ENCODE measurements at regions of chr3 and their contacts with region 1.

Region 1: DNA sequence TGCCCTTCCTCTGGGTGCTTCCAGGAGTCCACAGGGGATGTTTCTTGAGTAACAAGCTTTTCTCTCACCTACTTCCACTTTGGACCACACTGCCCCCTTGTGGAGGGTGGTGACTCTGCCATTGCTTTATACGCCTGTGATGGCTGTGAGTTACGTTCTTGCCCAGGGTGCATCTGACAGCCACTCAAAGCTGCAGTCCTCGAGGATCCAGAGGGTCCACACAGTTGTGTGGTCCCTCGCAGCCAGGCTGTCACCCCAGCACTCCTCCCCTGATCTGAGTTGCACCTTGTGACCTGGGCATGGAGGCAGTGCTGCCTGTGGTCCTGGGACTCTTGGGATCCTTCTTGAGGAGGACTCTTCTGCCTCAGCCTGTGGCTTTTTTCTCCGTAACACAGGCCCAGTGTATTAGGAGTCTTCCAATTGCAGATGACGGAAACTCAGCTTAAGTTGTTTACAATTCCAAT is 23.4 kb downstream of the FOXL2 start:
- DNase-seq: peak in 1 of 2 experiments; percentile 96
- H3K4me3 ChIP-seq: no peak overlapping the region
- H3K27ac ChIP-seq: no peak overlapping the region
- H3K4me1 ChIP-seq: no peaks in the 10 kb centered on the region; a peak in 1 of 7 replicates
- H3K27me3 ChIP-seq: no peaks in the 10 kb centered on the region; a peak in 1 of 7 replicates
- CTCF ChIP-seq: peak; percentile 82 to 96 (median 86)
- EP300 ChIP-seq: no peak
- POLR2A ChIP-seq: no peak
- RAD21 ChIP-seq: peak; percentile 90 to 91

Region 2: DNA sequence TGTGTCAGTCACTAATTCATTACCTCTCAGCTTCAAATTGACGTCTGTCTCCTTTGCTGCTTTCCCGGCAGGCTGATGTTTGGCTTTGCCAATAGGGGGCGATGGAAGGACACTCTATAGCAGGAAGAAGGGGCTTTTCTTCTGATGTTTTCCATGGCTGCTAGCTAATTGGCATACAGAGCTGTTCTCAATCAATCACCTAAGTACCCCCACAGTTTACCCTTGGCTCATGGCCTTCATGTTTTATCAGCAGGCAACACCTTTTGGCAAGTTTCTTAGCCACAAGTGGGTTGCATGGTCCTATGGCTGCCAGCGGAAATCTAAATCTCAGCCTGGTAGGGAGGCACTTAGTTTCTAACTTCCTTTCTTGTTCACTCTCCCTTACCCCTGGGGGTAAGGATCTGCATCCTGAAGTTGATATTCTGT is 444.1 kb before region 1 on chr3:
- CTCF ChIA-PET with region 1: interaction called, 33 read pairs
- POLR2A ChIA-PET with region 1: no interaction called
- DNase-seq: no peak
- H3K4me3 ChIP-seq: no peak overlapping the region
- H3K27ac ChIP-seq: no peak overlapping the region
- H3K4me1 ChIP-seq: peaks cover 0 to 2% (median 0%) of the 10 kb centered on the region in 4 experiments; a peak in 1 of 7 replicates
- H3K27me3 ChIP-seq: no peaks in the 10 kb centered on the region
- CTCF ChIP-seq: peak; percentile 74 to 90 (median 81)
- EP300 ChIP-seq: no peak
- POLR2A ChIP-seq: no peak
- RAD21 ChIP-seq: peak; percentile 87 to 91

Region 3: DNA sequence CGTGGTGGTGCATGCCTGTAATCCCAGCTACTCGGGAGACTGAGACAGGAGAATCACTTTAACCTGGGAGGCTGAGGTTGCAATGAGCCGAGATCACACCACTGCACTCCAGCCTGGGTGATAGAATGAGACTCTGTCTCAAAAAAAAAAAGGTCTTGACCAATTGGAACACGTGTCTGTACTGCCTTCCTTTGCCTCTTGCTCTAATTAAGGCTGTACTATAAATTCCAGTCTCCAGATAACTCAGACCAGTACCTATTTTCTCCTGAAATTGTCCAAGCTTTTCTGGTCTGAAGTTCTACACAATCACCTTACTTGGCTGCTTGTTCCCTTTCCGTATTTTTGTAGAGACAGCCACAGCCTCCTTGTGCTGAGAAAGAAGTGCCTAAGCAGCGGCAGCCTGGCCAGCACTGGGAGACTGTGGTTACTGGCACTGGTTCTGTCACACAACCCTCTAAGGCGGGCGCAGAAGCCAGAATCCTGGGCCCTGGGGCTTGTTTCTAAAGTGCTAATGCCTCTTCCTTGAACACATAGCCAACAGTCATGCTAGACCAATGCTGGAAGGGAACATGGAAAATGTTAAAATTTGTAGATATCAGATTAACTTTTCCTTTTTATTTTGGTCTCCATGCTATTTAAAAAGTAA is 323.3 kb before region 1 on chr3:
- CTCF ChIA-PET with region 1: interaction called, 80 read pairs
- POLR2A ChIA-PET with region 1: no interaction called
- DNase-seq: no peak
- H3K4me3 ChIP-seq: no peak overlapping the region
- H3K27ac ChIP-seq: no peak overlapping the region
- H3K4me1 ChIP-seq: no peaks in the 10 kb centered on the region
- H3K27me3 ChIP-seq: no peaks in the 10 kb centered on the region
- CTCF ChIP-seq: no peak
- EP300 ChIP-seq: no peak
- POLR2A ChIP-seq: no peak
- RAD21 ChIP-seq: no peak

Region 4: GRCh38 chr3:138668107-138668506 is 255.5 kb before region 1 on chr3:
- CTCF ChIA-PET with region 1: interaction called, 20 read pairs
- POLR2A ChIA-PET with region 1: no interaction called
- DNase-seq: no peak
- H3K4me3 ChIP-seq: no peak overlapping the region
- H3K27ac ChIP-seq: no peak overlapping the region
- H3K4me1 ChIP-seq: no peaks in the 10 kb centered on the region
- H3K27me3 ChIP-seq: no peaks in the 10 kb centered on the region
- CTCF ChIP-seq: no peak
- EP300 ChIP-seq: no peak
- POLR2A ChIP-seq: no peak
- RAD21 ChIP-seq: no peak

Region 5: GRCh38 chr3:138842483-138843188 is 80.9 kb before region 1 on chr3:
- CTCF ChIA-PET with region 1: interaction called, 20 read pairs
- POLR2A ChIA-PET with region 1: no interaction called
- DNase-seq: no peak
- H3K4me3 ChIP-seq: no peak overlapping the region
- H3K27ac ChIP-seq: no peak overlapping the region
- H3K4me1 ChIP-seq: peaks cover 7 to 21% (median 12%) of the 10 kb centered on the region in 4 experiments; a peak in 6 of 7 replicates
- H3K27me3 ChIP-seq: no peaks in the 10 kb centered on the region
- CTCF ChIP-seq: no peak
- EP300 ChIP-seq: no peak
- POLR2A ChIP-seq: no peak
- RAD21 ChIP-seq: no peak

Region 6: DNA sequence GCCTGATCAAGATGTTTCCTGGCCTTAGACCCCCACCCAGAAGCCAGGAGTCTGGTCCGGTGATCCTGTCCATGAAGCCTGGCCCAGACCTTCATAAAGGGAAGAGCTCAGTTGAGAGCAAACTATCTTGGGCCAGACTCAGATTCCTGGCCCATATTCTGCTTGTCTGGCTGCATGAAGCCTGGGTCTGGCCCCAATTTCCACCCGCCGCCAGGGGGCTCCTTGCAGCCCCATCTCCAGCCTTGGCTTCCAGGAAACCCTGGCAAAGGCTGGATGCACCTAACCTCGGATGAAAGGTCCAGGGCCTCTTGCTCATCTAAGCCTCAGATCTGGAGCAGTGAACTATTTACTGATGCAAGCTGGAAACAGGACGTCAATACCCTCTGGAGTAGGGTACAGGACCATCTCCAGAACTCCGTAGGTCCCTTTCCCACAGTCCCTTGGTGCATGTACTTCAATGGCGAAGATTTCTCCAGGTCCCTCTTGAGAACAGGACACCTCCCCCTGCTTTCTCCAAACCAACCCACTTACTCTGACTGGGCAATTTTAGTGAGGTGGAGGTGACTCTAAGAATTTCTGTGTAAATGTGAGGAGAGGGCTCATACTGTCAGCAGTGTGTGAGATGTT is 17.8 kb after region 1 on chr3:
- CTCF ChIA-PET with region 1: interaction called, 180 read pairs
- POLR2A ChIA-PET with region 1: interaction called, 3 read pairs
- DNase-seq: peak in 1 of 2 experiments; percentile 88
- H3K4me3 ChIP-seq: no peak overlapping the region
- H3K27ac ChIP-seq: no peak overlapping the region
- H3K4me1 ChIP-seq: peaks cover 6 to 39% (median 23%) of the 10 kb centered on the region in 4 experiments
- H3K27me3 ChIP-seq: peaks cover 96 to 100% (median 98%) of the 10 kb centered on the region in 4 experiments
- CTCF ChIP-seq: peak in 2 of 3 experiments; percentile 89 to 92; a peak in 3 of 4 replicates
- EP300 ChIP-seq: no peak
- POLR2A ChIP-seq: no peak
- RAD21 ChIP-seq: peak; percentile 61 to 75

Measured in H1 (cell line).